ENCODE measurements at regions of chr14 and their contacts with region 1.

Region 1: GRCh38 chr14:28142400-28143015 is 624.1 kb upstream of the FOXG1 start:
- DNase-seq: peak; percentile 65
- ATAC-seq: peak; percentile 52
- H3K4me3 ChIP-seq: no peak overlapping the region
- H3K27ac ChIP-seq: no peak overlapping the region
- H3K4me1 ChIP-seq: no peaks in the 10 kb centered on the region
- H3K27me3 ChIP-seq: no peaks in the 10 kb centered on the region
- CTCF ChIP-seq: peak; percentile 81

Region 2: GRCh38 chr14:27566843-27567382 is 575.6 kb before region 1 on chr14:
- CTCF ChIA-PET with region 1: no interaction called
- POLR2A ChIA-PET with region 1: no interaction called
- intact Hi-C with region 1: loop called (anchors 10 kb)
- DNase-seq: no peak
- ATAC-seq: no peak
- H3K4me3 ChIP-seq: no peak overlapping the region
- H3K27ac ChIP-seq: no peak overlapping the region
- H3K4me1 ChIP-seq: no peaks in the 10 kb centered on the region
- H3K27me3 ChIP-seq: no peaks in the 10 kb centered on the region
- CTCF ChIP-seq: no peak

Region 3: GRCh38 chr14:27587103-27587502 is 555.4 kb before region 1 on chr14:
- CTCF ChIA-PET with region 1: no interaction called
- POLR2A ChIA-PET with region 1: no interaction called
- intact Hi-C with region 1: loop called (anchors 10 kb)
- DNase-seq: no peak
- ATAC-seq: no peak; the same call in 1 of the 2 replicates
- H3K4me3 ChIP-seq: no peak overlapping the region
- H3K27ac ChIP-seq: no peak overlapping the region
- H3K4me1 ChIP-seq: no peaks in the 10 kb centered on the region
- H3K27me3 ChIP-seq: no peaks in the 10 kb centered on the region
- CTCF ChIP-seq: peak; percentile 48

Region 4: DNA sequence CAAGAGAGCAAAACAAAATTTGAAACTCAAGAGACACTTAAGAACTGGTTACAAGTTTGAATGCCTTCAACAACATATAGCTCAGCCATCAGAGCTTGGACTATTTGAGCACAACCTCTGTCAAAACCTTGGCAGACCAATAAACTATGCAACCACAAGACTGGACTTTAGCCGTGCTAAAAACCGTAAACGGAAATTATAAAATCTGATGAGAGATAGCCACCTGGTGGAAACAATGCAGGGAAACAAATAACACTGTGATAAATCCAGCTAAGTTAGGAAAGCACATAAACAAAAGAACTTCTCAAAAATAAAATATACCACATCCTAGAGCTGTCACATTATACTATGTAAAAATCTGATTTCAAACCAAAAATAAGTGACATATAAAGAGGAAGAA is 470.5 kb before region 1 on chr14:
- CTCF ChIA-PET with region 1: no interaction called
- POLR2A ChIA-PET with region 1: no interaction called
- intact Hi-C with region 1: loop called (anchors 5 kb)
- DNase-seq: peak; percentile 22
- ATAC-seq: peak; percentile 84
- H3K4me3 ChIP-seq: no peak overlapping the region
- H3K27ac ChIP-seq: no peak overlapping the region
- H3K4me1 ChIP-seq: no peaks in the 10 kb centered on the region
- H3K27me3 ChIP-seq: no peaks in the 10 kb centered on the region
- CTCF ChIP-seq: peak; percentile 50; the same call in 1 of the 2 replicates

Region 5: GRCh38 chr14:28012634-28013407 is 129.7 kb before region 1 on chr14:
- CTCF ChIA-PET with region 1: no interaction called
- POLR2A ChIA-PET with region 1: no interaction called
- intact Hi-C with region 1: loop called (anchors 5 kb)
- DNase-seq: peak; percentile 10
- ATAC-seq: peak; percentile 91
- H3K4me3 ChIP-seq: no peak overlapping the region
- H3K27ac ChIP-seq: no peak overlapping the region
- H3K4me1 ChIP-seq: no peaks in the 10 kb centered on the region
- H3K27me3 ChIP-seq: no peaks in the 10 kb centered on the region; the same call in 1 of the 2 replicates
- CTCF ChIP-seq: 0 out of 2 replicates have a peak, but pooled peaks have one; percentile 18

Region 6: DNA sequence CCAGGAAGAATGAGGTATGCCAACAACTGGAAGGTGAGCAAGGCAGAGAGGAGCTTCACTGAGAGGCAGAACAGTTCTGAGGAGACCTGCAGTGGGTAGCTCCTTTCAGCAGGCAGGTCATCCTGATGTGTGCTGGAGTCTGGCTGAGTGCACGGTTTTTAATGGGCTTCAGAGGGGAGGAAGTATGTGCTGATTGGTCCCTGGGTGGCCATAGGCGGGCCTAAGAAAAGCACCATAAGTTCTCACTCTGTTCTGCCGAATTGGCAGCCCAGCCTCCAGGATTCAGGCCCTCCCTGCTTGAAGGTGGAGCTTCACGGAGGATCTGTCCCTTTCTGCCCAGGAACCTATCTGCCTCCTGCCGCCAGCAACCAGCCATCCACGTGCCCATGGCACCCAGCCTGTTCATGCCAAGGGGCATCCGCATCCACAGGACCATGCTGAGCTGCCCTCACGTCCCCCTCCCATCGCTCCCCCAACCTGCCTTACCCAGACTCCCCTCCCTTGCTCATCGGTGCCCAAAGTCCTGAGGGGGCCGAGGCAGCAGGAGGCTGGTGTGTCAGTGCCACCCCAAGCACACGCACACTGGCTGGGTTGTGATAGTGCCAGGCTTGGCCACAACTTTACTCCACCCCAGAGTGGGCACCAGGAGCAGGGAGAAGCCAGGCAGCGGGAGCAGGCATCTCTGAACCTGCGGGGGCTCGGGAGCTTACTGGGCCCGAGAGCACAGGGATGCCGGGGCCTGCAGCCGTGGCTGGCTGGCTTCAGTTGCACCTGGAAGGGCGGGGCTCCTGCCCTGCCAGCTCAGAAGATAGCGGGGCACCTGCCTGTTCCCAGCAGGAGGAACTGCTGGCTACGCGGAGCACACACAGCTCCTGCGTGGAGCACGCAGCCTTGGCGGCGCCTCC is 15.6 kb after region 1 on chr14:
- CTCF ChIA-PET with region 1: no interaction called
- POLR2A ChIA-PET with region 1: no interaction called
- intact Hi-C with region 1: no loop called
- DNase-seq: no peak
- ATAC-seq: no peak
- H3K4me3 ChIP-seq: no peak overlapping the region
- H3K27ac ChIP-seq: no peak overlapping the region
- H3K4me1 ChIP-seq: no peaks in the 10 kb centered on the region
- H3K27me3 ChIP-seq: no peaks in the 10 kb centered on the region
- CTCF ChIP-seq: no peak

Region 7: DNA sequence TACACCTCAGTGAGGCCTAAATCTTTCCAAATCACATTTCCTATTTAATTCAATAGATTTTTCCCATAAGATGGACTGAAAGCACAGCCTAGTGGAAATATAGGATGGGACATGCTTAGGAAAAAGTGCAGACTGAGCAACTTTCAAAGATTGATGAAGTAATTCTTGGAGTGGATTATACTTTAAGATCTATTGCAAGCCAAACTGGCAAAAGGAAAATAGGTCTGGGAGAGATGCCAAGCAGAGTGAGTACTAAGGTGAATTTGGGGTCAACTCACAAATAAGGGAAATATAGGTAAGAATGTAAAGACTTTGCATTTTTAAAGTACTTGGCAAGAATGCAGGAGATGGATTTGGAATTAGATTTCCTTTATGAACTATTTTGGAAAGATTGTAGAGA is 453.9 kb after region 1 on chr14:
- CTCF ChIA-PET with region 1: no interaction called
- POLR2A ChIA-PET with region 1: no interaction called
- intact Hi-C with region 1: loop called (anchors 2 kb)
- DNase-seq: peak; percentile 69
- ATAC-seq: peak; percentile 57
- H3K4me3 ChIP-seq: no peak overlapping the region
- H3K27ac ChIP-seq: no peak overlapping the region
- H3K4me1 ChIP-seq: peaks cover 27% of the 10 kb centered on the region
- H3K27me3 ChIP-seq: no peaks in the 10 kb centered on the region
- CTCF ChIP-seq: peak; percentile 72

Region 8: DNA sequence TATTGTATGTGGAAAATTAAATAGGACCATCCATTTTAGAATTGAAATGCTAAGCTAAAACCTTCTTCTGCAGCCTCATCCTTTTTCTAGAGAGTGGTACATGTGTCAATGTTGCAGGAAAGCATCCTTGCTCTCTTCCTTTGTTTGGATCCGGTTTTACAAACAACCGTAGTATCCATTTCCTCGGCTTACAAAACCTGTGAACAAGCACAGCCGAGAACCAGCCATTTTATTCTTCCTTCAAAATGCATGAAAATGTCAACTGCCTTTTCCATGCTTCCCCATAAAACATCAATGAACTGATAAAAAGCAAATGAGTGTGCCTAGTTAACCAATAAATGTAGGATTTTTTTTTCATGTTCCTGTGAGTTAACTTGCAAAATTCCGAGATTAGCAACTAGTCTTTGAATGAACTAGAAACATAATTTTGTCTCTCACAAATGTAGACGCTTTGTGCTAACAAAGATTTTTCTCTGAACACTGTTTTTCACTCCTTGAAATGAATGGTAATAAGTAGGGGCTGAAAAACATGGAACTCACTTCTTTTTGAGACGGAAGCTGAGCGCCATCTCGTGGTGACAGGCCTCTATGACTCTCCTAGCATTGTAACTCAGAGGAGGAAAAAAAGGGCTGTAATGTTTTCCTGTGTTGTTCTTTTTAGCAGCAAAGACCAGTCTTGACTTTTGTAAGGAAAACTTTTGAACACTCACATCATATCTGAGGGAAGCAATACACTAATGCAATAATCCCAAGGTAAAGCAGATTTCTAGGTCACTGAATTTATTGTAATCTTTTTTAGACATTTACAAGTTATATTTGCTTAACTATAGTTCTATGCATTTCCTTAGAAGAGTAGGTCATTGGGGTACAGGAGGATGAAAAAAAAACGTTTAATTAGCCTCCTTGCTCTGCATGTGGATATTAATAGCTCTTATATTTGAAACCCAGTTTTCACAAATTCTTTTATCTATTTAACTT is 466.6 kb after region 1 on chr14:
- CTCF ChIA-PET with region 1: no interaction called
- POLR2A ChIA-PET with region 1: no interaction called
- intact Hi-C with region 1: loop called (anchors 2 kb)
- DNase-seq: peak; percentile 82
- ATAC-seq: peak; percentile 80
- H3K4me3 ChIP-seq: no peak overlapping the region
- H3K27ac ChIP-seq: no peak overlapping the region
- H3K4me1 ChIP-seq: peaks cover 5% of the 10 kb centered on the region; the same call in 1 of the 2 replicates
- H3K27me3 ChIP-seq: no peaks in the 10 kb centered on the region
- CTCF ChIP-seq: peak; percentile 97